ENCODE measurements at regions of chr11 and their contacts with region 1.

Region 1: GRCh38 chr11:95705485-95706124 is 84.0 kb downstream of the FAM76B start:
- DNase-seq: peak; percentile 81
- ATAC-seq: peak; percentile 90
- H3K4me3 ChIP-seq: no peak overlapping the region
- H3K27ac ChIP-seq: no peak overlapping the region
- H3K4me1 ChIP-seq: peaks cover 6% of the 10 kb centered on the region
- H3K27me3 ChIP-seq: peaks cover 9% of the 10 kb centered on the region
- CTCF ChIP-seq: peak; percentile 97
- POLR2A ChIP-seq: 0 out of 2 replicates have a peak, but pooled peaks have one; percentile 46
- RAD21 ChIP-seq: peak; percentile 97

Region 2: GRCh38 chr11:95067039-95067840 is 638.4 kb before region 1 on chr11:
- CTCF ChIA-PET with region 1: interaction called, 3 read pairs
- POLR2A ChIA-PET with region 1: no interaction called
- dilution Hi-C with region 1: no loop called
- in situ Hi-C with region 1: no loop called
- intact Hi-C with region 1: loop called (anchors 1 kb)
- DNase-seq: peak; percentile 72
- ATAC-seq: peak; percentile 90
- H3K4me3 ChIP-seq: peak overlapping the region; percentile 91
- H3K27ac ChIP-seq: peak overlapping the region; percentile 85
- H3K4me1 ChIP-seq: no peaks in the 10 kb centered on the region
- H3K27me3 ChIP-seq: no peaks in the 10 kb centered on the region
- CTCF ChIP-seq: peak; percentile 65
- POLR2A ChIP-seq: peak; percentile 57
- RAD21 ChIP-seq: peak; percentile 24; the same call in 1 of the 2 replicates

Region 3: DNA sequence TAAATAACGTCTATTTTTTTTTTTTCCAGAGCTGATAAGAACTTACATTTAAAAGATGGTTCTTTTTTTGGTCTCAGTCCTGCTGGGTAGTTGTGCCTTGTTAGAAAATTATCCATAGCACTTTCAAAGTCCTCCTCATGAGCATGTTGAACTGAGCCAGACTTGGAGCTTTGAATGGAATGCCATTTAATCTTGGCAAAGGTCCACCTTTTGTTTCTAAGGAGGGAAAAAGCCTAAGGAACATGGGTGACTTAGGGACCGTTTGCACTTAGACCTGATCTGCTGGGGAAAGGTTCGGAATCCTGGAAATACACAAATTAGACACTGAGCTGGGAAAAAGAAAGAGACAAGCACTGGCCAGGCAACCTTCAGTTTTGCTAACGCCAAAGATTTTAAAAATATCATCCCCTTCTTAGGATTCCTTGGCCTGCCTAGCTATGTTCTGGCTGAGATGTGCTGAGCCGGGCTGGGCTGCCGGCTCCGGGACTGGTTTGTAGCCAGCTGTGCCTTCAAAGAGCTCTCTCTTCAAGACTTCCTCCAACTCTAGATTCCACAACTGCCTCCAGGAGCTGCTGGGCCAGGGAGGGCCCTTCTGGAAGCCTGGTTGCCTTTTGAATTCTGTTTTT is 548.6 kb before region 1 on chr11:
- CTCF ChIA-PET with region 1: interaction called, 45 read pairs
- POLR2A ChIA-PET with region 1: interaction called, 3 read pairs
- dilution Hi-C with region 1: no loop called
- in situ Hi-C with region 1: loop called (anchors 5 kb)
- intact Hi-C with region 1: no loop called
- DNase-seq: no peak
- ATAC-seq: no peak
- H3K4me3 ChIP-seq: no peak overlapping the region
- H3K27ac ChIP-seq: no peak overlapping the region
- H3K4me1 ChIP-seq: no peaks in the 10 kb centered on the region
- H3K27me3 ChIP-seq: peaks cover 2% of the 10 kb centered on the region; the same call in 1 of the 2 replicates
- CTCF ChIP-seq: no peak
- POLR2A ChIP-seq: no peak
- RAD21 ChIP-seq: no peak

Region 4: GRCh38 chr11:95404330-95404729 is 301.3 kb before region 1 on chr11:
- CTCF ChIA-PET with region 1: no interaction called
- POLR2A ChIA-PET with region 1: no interaction called
- dilution Hi-C with region 1: no loop called
- in situ Hi-C with region 1: no loop called
- intact Hi-C with region 1: loop called (anchors 10 kb)
- DNase-seq: no peak
- ATAC-seq: no peak
- H3K4me3 ChIP-seq: no peak overlapping the region
- H3K27ac ChIP-seq: no peak overlapping the region
- H3K4me1 ChIP-seq: no peaks in the 10 kb centered on the region
- H3K27me3 ChIP-seq: no peaks in the 10 kb centered on the region
- CTCF ChIP-seq: no peak
- POLR2A ChIP-seq: no peak
- RAD21 ChIP-seq: no peak

Region 5: GRCh38 chr11:95589893-95590612 is 115.6 kb before region 1 on chr11:
- CTCF ChIA-PET with region 1: no interaction called
- POLR2A ChIA-PET with region 1: no interaction called
- dilution Hi-C with region 1: no loop called
- in situ Hi-C with region 1: no loop called
- intact Hi-C with region 1: no loop called
- DNase-seq: no peak
- ATAC-seq: no peak
- H3K4me3 ChIP-seq: no peak overlapping the region
- H3K27ac ChIP-seq: no peak overlapping the region
- H3K4me1 ChIP-seq: peaks cover 11% of the 10 kb centered on the region
- H3K27me3 ChIP-seq: no peaks in the 10 kb centered on the region
- CTCF ChIP-seq: no peak
- POLR2A ChIP-seq: no peak
- RAD21 ChIP-seq: no peak

Region 6: DNA sequence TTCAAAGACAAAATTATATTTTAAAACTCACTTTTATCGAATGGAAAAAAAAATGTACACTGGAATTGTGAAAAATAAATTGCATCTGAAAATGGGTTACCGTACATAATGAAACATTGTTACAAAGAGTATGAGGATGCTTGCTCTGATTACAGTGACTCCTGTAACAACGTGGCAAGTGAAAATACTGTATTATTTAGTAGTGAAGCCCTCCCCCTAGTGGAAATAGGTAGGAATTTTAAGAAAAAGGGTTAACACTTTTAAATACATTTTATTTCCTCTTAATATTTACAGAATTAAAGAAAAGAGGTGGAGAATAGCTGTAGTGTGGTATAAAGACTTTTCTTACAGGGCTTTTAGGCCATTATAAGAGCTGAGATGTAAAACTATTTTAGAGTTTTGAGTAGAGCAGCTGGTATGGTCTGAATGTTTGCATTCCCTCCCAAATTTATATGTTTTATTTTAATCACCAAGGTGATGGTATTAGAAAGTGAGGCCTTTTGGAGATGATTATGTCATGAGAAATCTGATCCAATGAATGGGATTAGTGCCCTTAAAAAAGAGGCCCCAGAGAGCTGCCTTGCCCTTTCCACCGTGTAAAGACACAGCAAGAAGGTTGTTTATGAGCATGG is 58.8 kb after region 1 on chr11:
- CTCF ChIA-PET with region 1: interaction called, 3 read pairs
- POLR2A ChIA-PET with region 1: no interaction called
- dilution Hi-C with region 1: no loop called
- in situ Hi-C with region 1: no loop called
- intact Hi-C with region 1: loop called (anchors 5 kb)
- DNase-seq: peak; percentile 67
- ATAC-seq: peak; percentile 82
- H3K4me3 ChIP-seq: no peak overlapping the region
- H3K27ac ChIP-seq: no peak overlapping the region
- H3K4me1 ChIP-seq: peaks cover 2% of the 10 kb centered on the region; the same call in 1 of the 2 replicates
- H3K27me3 ChIP-seq: peaks cover 9% of the 10 kb centered on the region
- CTCF ChIP-seq: peak; percentile 75
- POLR2A ChIP-seq: no peak
- RAD21 ChIP-seq: peak; percentile 71

Region 7: DNA sequence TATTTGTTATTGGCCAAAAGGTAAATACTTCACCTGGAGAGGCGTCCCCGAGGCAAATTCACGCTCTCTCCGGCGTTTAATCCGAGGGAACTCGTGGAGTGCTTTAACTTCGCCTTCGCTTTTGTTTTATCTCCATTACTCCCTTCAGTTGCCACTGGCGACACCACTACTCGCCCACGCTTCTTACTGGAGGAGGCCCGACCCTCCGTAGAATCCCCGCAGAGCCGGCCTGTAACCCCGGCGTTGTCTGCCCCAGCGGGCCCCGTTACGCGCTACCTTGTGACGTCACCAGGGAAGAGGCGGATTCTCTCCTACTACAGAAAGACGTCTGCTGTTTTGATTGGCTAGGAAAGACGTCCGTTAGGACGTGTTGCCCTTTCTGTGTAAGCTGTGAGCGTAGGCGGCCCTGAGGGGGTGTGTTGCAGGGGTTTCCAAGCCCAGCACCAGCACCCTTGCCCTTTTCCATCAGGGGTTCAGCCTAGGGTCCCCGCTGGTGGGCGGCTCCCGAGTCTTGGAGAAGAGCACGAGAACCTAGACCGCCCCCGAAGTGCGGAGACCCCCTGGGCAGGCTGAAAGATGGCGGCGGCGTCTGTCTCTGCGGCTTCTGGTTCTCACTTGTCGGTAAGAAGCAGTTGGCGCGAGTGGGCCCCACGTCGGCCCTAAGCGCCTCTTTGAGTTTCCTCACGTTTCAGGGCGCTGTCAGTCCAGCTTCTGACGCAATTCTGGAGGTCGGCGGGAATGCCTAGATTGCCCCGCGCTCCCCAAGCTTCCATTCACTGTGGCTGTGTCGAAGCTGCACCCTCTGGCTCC is 84.7 kb after region 1 on chr11 and contains the start of gene CEP57:
- CTCF ChIA-PET with region 1: no interaction called
- POLR2A ChIA-PET with region 1: no interaction called
- dilution Hi-C with region 1: no loop called
- in situ Hi-C with region 1: no loop called
- intact Hi-C with region 1: no loop called
- DNase-seq: peak; percentile 99
- ATAC-seq: peak; percentile 76
- H3K4me3 ChIP-seq: peak within 1 kb of the TSS; percentile 78
- H3K27ac ChIP-seq: peak within 1 kb of the TSS; percentile 85
- H3K4me1 ChIP-seq: no peaks in the 10 kb centered on the region
- H3K27me3 ChIP-seq: no peaks in the 10 kb centered on the region
- CTCF ChIP-seq: no peak
- POLR2A ChIP-seq: peak; percentile 58
- RAD21 ChIP-seq: no peak
- total RNA-seq, gene CEP57: 30.5 and 38.0 TPM in 2 replicates

Region 8: DNA sequence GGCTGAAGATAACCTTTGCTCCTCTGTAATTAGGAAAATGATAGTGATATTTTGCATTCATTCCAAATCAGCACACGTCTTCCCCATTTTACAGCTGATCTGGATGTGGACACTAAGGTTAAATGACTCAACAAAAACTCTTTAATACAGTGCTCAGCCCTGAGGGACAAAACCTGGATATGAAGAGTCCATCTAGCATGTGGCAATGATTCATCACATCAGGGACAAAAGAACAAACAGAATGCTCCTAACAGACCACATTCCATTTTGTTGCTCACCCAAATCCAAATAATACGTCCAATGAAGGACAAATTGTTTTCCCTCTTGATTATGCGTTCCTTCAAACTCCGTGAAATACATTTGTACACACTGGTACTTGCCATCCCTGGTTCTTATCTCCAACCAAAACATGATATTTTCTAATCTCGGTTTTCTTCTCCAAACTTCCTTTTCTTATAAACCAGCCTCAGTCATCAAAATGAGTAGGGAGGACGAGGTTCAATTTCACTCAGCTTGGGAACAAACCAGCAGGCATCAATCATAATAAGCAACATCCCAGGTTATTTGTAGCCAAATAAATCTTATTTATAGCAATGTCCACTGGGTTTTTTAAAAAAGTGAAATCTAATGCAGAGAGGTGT is 272.0 kb after region 1 on chr11:
- CTCF ChIA-PET with region 1: no interaction called
- POLR2A ChIA-PET with region 1: no interaction called
- dilution Hi-C with region 1: no loop called
- in situ Hi-C with region 1: no loop called
- intact Hi-C with region 1: no loop called
- DNase-seq: peak; percentile 69
- ATAC-seq: peak; percentile 57
- H3K4me3 ChIP-seq: no peak overlapping the region
- H3K27ac ChIP-seq: no peak overlapping the region
- H3K4me1 ChIP-seq: peaks cover 1% of the 10 kb centered on the region; the same call in 1 of the 2 replicates
- H3K27me3 ChIP-seq: no peaks in the 10 kb centered on the region
- CTCF ChIP-seq: no peak
- POLR2A ChIP-seq: no peak
- RAD21 ChIP-seq: no peak

Measured in IMR-90 (cell line).